ENCODE measurements at regions of chr3 and their contacts with region 1.

Region 1: DNA sequence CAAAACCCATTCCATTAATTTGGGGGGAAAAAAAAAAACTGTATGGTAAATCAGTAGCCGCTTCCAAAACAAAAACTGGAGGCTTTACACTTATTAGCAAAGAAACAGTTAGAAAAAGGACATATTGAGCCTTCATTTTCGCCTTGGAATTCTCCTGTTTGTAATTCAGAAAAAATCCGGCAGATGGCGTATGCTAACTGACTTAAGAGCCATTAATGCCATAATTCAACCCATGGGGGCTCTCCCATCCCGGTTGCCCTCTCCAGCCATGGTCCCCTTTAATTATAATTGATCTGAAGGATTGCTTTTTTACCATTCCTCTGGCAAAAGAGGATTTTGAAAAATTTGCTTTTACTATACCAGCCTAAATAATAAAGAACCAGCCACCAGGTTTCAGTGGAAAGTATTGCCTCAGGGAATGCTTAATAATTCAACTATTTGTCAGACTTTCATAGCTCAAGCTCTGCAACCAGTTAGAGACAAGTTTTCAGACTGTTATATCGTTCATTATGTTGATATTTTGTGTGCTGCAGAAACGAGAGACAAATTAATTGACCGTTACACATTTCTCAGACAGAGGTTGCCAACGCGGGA is 9.4 kb upstream of the RPL24 start:
- DNase-seq: peak; percentile 61
- ATAC-seq: peak; percentile 65
- H3K4me3 ChIP-seq: no peak overlapping the region
- H3K27ac ChIP-seq: no peak overlapping the region
- H3K4me1 ChIP-seq: no peaks in the 10 kb centered on the region
- H3K27me3 ChIP-seq: no peaks in the 10 kb centered on the region
- CTCF ChIP-seq: peak; percentile 52 to 76 (median 68); a peak in 5 of 6 replicates
- POLR2A ChIP-seq: no peak
- RAD21 ChIP-seq: peak; percentile 67

Region 2: GRCh38 chr3:101803173-101803782 is 107.4 kb after region 1 on chr3:
- CTCF ChIA-PET with region 1: no interaction called
- POLR2A ChIA-PET with region 1: no interaction called
- RAD21 ChIA-PET with region 1: no interaction called
- intact Hi-C with region 1: loop called (anchors 5 kb)
- DNase-seq: peak; percentile 43
- ATAC-seq: peak; percentile 96
- H3K4me3 ChIP-seq: no peak overlapping the region
- H3K27ac ChIP-seq: no peak overlapping the region
- H3K4me1 ChIP-seq: no peaks in the 10 kb centered on the region
- H3K27me3 ChIP-seq: no peaks in the 10 kb centered on the region
- CTCF ChIP-seq: peak; percentile 53 to 88 (median 81); a peak in 5 of 6 replicates
- POLR2A ChIP-seq: no peak
- RAD21 ChIP-seq: peak; percentile 49